Breast epithelium (tissue), 4 donors: ENCODE measurements at regions of chrX and their contacts with region 1.

Region 1: GRCh38 chrX:47112316-47112954 is 32.1 kb downstream of the NDUFB11 start:
- DNase-seq: peak in 1 of 2 donors; percentile 51
- H3K4me3 ChIP-seq: no peak overlapping the region
- H3K27ac ChIP-seq: no peak overlapping the region
- H3K4me1 ChIP-seq: no peaks in the 10 kb centered on the region
- H3K27me3 ChIP-seq: peaks cover 0 to 35% of the 10 kb centered on the region in 2 donors
- CTCF ChIP-seq: no peak
- POLR2A ChIP-seq: no peak

Region 2: DNA sequence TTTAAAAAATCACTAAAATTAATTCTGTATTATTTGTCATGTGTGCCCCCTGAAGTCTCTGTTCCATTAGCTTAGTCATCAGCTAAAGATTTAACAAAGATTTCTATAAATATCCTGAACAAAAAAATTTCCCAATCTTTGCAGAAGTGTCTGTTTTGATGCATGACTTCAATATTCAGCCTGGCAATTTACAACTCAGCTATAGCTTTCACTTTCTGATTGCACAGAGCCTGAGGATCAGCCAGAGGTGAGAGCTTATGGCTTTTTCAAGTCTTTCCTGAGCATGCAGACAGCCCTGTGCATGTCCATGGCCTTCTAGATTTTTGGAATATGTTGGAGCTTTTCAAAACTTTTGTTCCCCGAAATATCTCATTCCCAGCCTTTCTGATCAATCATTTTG is 987.3 kb before region 1 on chrX:
- intact Hi-C with region 1: no loop called
- DNase-seq: no peak
- H3K4me3 ChIP-seq: no peak overlapping the region
- H3K27ac ChIP-seq: no peak overlapping the region
- H3K4me1 ChIP-seq: no peaks in the 10 kb centered on the region
- H3K27me3 ChIP-seq: peaks cover 0 to 8% of the 10 kb centered on the region in 2 donors
- CTCF ChIP-seq: no peak
- POLR2A ChIP-seq: no peak

Region 3: GRCh38 chrX:46935295-46935694 is 177.1 kb before region 1 on chrX:
- intact Hi-C with region 1: no loop called
- DNase-seq: no peak
- H3K4me3 ChIP-seq: no peak overlapping the region
- H3K27ac ChIP-seq: no peak overlapping the region
- H3K4me1 ChIP-seq: no peaks in the 10 kb centered on the region
- H3K27me3 ChIP-seq: peaks cover 0 to 1% of the 10 kb centered on the region in 2 donors
- CTCF ChIP-seq: no peak
- POLR2A ChIP-seq: no peak

Region 4: GRCh38 chrX:47125102-47125501 is 12.7 kb after region 1 on chrX:
- intact Hi-C with region 1: loop called (anchors 1 kb)
- DNase-seq: no peak
- H3K4me3 ChIP-seq: no peak overlapping the region
- H3K27ac ChIP-seq: no peak overlapping the region
- H3K4me1 ChIP-seq: no peaks in the 10 kb centered on the region
- H3K27me3 ChIP-seq: peaks cover 0 to 35% of the 10 kb centered on the region in 2 donors
- CTCF ChIP-seq: no peak
- POLR2A ChIP-seq: no peak